ENCODE measurements at regions of chr6 and their contacts with region 1.

Region 1: DNA sequence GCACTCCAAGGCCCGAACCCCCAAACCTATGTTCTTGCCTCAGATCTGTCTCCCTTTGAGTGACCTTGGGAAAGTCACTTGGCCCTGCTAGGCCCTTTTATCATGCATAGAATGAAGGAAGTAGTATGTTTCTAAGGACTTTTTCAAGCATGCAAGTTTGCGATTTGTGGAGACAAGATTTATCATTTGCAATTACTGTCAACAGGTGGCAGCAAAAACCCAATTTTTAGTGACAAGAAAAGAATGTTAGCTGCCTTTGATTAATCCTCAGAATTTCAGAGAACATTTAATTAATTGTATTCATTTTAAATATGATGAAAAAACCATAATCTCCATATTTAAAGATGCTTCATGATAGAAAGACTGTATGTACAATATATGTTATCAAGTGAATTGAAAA is 28.3 kb upstream of the PREP start:
- DNase-seq: peak; percentile 38

Region 2: DNA sequence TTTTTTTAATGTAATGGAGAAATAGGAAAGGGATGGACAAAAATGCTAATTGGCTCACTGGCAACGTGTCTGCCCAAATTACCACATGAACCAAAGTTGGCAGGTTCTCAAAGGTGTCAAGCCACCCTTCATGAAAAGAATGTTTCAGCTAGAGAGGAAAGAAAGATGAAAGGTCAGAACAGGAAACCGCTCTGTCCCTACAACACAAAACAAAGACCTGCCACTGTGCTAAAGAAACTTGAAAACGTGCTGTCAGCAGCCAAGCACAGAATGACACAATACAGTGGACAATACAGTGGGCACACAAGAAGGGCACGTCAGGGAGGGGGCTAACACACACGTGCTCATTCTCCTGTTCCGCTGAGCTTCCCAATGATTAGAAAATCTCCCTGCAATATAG is 33.2 kb before region 1 on chr6:
- CTCF ChIA-PET with region 1: interaction called, 10 read pairs
- POLR2A ChIA-PET with region 1: no interaction called
- DNase-seq: no peak

Region 3: DNA sequence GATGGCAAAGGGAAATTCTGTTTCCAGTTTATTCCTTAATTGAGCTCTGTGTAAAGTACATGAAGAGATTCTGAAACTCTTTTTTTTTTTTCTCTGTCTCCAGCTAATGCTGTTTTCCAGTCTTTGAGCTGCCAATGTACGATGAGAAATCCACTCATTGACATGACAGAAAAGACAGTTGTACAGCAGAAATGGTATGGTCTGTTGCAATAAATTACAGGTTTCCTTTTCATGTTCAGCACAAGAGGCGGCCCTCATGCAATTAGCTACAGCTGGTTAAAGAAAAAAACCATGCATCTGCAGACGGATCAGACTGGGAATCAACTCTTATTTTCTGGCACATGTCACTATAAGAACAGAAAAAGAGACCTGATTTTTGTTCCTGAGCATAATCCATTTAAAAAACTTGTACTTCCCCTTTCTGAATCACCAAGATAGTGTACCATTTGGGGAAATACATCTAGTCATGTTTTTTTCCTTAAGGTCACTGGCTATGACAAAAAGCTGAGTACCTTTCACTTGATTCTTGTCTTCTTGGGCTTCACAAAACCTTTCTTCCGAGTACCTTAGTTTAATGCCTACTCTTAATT is 261.5 kb after region 1 on chr6:
- CTCF ChIA-PET with region 1: interaction called, 11 read pairs
- POLR2A ChIA-PET with region 1: no interaction called
- DNase-seq: no peak

Region 4: DNA sequence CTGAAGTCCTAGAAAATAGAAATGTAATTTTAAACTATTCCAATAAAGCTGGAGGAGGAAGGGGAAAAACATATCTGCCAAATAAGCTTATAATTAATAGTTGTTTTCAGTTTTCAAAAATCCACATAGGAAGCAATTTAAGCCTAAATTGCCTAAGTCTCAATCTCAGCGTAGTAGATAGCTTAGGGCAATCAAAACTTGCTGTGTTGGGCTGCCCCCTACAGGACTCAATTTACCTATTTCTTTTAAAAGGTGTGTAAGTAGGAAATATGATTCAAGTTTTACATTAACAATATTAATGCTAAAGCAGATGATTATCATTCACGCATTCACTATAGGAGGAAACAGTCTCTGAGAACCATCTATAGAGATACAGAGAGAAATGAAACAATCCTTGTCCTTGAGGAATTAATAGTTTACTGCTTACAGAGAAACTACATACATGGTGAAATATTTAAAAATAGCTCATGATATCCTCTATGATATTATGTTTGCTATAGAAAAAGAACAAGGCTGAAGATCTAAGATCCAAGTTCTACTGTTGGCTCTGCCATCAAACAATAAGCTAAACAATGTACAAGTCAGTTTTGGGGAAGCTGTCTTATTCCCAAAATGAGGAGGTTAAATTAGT is 792.2 kb after region 1 on chr6:
- CTCF ChIA-PET with region 1: interaction called, 14 read pairs
- POLR2A ChIA-PET with region 1: no interaction called
- DNase-seq: peak; percentile 27